PC-3 (cell line): ENCODE measurements at regions of chr1 and their contacts with region 1.

Region 1: GRCh38 chr1:41919764-41920397 is 1.2 kb upstream of the HIVEP3 start:
- DNase-seq: no peak
- ATAC-seq: no peak
- H3K4me3 ChIP-seq: peak overlapping the region; percentile 23; the same call in 1 of the 2 replicates
- H3K27ac ChIP-seq: peak overlapping the region; percentile 77
- H3K4me1 ChIP-seq: peaks cover 63% of the 10 kb centered on the region
- H3K27me3 ChIP-seq: no peaks in the 10 kb centered on the region
- CTCF ChIP-seq: no peak

Region 2: DNA sequence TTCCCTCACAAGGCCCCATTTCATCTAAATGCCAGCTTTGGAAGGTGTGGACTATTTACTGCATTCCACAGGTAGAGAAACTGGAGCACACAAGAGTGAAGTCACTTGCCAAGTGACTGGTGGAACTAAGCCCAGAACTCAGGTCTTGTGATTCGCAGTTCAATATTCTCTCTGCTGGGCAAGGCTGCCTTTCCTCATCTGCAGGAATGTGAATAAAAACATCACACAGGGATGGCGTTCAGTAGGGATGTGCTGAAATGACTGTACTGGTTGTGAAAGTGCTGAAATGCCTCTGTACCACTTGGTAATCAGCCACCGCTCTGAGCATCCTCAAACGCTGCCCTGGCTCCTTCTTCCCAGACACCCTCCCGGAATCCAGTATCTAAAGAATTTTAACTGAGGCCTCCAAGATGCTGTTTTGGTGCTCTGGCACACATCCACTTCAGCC is 146.7 kb before region 1 on chr1:
- CTCF ChIA-PET with region 1: interaction called, 13 read pairs
- POLR2A ChIA-PET with region 1: no interaction called
- intact Hi-C with region 1: no loop called
- DNase-seq: peak; percentile 73
- ATAC-seq: peak; percentile 65
- H3K4me3 ChIP-seq: no peak overlapping the region
- H3K27ac ChIP-seq: no peak overlapping the region
- H3K4me1 ChIP-seq: peaks cover 42% of the 10 kb centered on the region
- H3K27me3 ChIP-seq: no peaks in the 10 kb centered on the region
- CTCF ChIP-seq: no peak

Region 3: GRCh38 chr1:41827991-41828570 is 91.8 kb before region 1 on chr1:
- CTCF ChIA-PET with region 1: no interaction called
- POLR2A ChIA-PET with region 1: interaction called, 11 read pairs
- intact Hi-C with region 1: no loop called
- DNase-seq: no peak
- ATAC-seq: no peak
- H3K4me3 ChIP-seq: no peak overlapping the region
- H3K27ac ChIP-seq: no peak overlapping the region
- H3K4me1 ChIP-seq: no peaks in the 10 kb centered on the region
- H3K27me3 ChIP-seq: no peaks in the 10 kb centered on the region
- CTCF ChIP-seq: no peak

Region 4: GRCh38 chr1:41862384-41863174 is 57.3 kb before region 1 on chr1:
- CTCF ChIA-PET with region 1: interaction called, 3 read pairs
- POLR2A ChIA-PET with region 1: no interaction called
- intact Hi-C with region 1: loop called (anchors 5 kb)
- DNase-seq: peak; percentile 96
- ATAC-seq: peak; percentile 76
- H3K4me3 ChIP-seq: peak overlapping the region; percentile 60
- H3K27ac ChIP-seq: peak overlapping the region; percentile 98
- H3K4me1 ChIP-seq: peaks cover 73% of the 10 kb centered on the region
- H3K27me3 ChIP-seq: no peaks in the 10 kb centered on the region
- CTCF ChIP-seq: no peak

Region 5: GRCh38 chr1:41980827-41981653 is 61.2 kb after region 1 on chr1:
- CTCF ChIA-PET with region 1: no interaction called
- POLR2A ChIA-PET with region 1: no interaction called
- intact Hi-C with region 1: loop called (anchors 2 kb)
- DNase-seq: peak; percentile 58
- ATAC-seq: peak; percentile 87
- H3K4me3 ChIP-seq: peak overlapping the region; percentile 15; the same call in 1 of the 2 replicates
- H3K27ac ChIP-seq: peak overlapping the region; percentile 71
- H3K4me1 ChIP-seq: peaks cover 38% of the 10 kb centered on the region
- H3K27me3 ChIP-seq: no peaks in the 10 kb centered on the region
- CTCF ChIP-seq: no peak